Motor neuron (in vitro differentiated cells): ENCODE measurements at regions of chr21 and their contacts with region 1.

Region 1: GRCh38 chr21:31198575-31198974 is 145.5 kb downstream of the TIAM1 start:
- ATAC-seq: peak in 5 of 8 experiments; percentile 13 to 64 (median 60)
- H3K4me3 ChIP-seq: no peak overlapping the region
- H3K27ac ChIP-seq: no peak overlapping the region
- H3K4me1 ChIP-seq: no peaks in the 10 kb centered on the region

Region 2: GRCh38 chr21:30354308-30355005 is 844.1 kb before region 1 on chr21:
- in situ Hi-C with region 1: no loop called
- ATAC-seq: no peak
- H3K4me3 ChIP-seq: no peak overlapping the region
- H3K27ac ChIP-seq: no peak overlapping the region
- H3K4me1 ChIP-seq: peaks cover 6 to 16% of the 10 kb centered on the region in 2 donors

Region 3: GRCh38 chr21:31335957-31336738 is 137.6 kb after region 1 on chr21:
- in situ Hi-C with region 1: loop called in 1 of 9 experiments (anchors 10 kb)
- ATAC-seq: peak; percentile 40 to 98 (median 67)
- H3K4me3 ChIP-seq: no peak overlapping the region
- H3K27ac ChIP-seq: peak overlapping the region in 1 of 2 donors; percentile 23
- H3K4me1 ChIP-seq: peaks cover 7 to 12% of the 10 kb centered on the region in 2 donors

Region 4: DNA sequence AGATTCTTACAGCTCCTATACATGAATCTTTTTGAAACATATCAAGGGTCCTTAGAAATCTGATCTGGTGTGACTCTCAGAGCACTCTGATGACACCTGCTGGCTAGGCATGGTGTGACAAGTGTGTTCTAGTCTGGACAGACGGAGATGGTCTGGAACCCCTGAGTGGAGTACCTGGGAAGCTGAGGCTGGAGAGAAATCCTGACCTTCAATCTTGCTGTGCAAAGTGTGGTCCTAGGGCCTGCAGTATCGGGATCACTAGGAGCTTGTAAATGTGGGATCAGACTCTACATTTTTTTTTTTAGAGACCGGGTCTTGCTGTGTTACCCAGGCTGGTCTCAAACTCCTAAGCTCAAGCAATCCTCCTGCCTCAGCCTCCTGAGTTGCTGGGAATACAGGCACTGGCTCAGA is 382.3 kb after region 1 on chr21:
- in situ Hi-C with region 1: loop called in 5 of 9 experiments (anchors 10 to 25 kb)
- ATAC-seq: peak; percentile 19 to 87 (median 56)
- H3K4me3 ChIP-seq: no peak overlapping the region
- H3K27ac ChIP-seq: no peak overlapping the region
- H3K4me1 ChIP-seq: peaks cover 10 to 15% of the 10 kb centered on the region in 2 donors

Region 5: DNA sequence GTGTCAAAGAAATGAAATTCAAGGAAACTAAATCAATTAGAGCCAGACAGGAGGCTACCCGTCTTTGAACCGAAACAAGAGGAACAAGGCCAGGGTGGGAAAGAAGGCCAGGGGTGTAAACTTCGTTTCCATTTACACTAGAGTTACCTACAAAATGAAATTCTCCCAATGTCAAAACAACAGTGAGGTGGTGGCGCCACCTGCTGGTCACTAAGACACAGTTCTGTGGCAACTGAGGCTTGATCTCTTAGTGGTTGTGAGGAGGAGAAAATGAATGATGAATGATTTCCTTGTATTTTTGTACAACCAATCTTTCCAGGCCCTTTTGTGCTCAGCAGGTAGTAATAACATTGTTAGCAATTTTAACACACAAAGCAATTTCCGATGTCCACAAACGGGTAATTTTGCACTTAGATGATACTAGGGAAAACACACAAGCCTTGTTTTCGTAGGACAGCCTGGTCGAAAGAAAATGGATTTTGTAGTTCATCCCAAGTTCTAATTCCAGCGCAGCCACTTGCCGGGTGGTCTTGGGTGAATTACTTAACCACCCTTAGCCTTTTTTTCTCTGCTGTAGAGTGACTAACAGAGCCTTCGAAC is 406.1 kb after region 1 on chr21:
- in situ Hi-C with region 1: loop called in 8 of 9 experiments (anchors 10 to 25 kb)
- ATAC-seq: peak; percentile 57 to 88 (median 71)
- H3K4me3 ChIP-seq: no peak overlapping the region
- H3K27ac ChIP-seq: no peak overlapping the region
- H3K4me1 ChIP-seq: peaks cover 9 to 12% of the 10 kb centered on the region in 2 donors